Colonic mucosa (tissue), 4 donors: ENCODE measurements at regions of chr3 and their contacts with region 1.

Region 1: GRCh38 chr3:49906004-49906743 is 2.5 kb upstream of the MST1R start:
- DNase-seq: peak; percentile 90
- H3K4me3 ChIP-seq: peak overlapping the region; percentile 8
- H3K27ac ChIP-seq: peak overlapping the region; percentile 86
- H3K4me1 ChIP-seq: peaks cover 29% of the 10 kb centered on the region
- H3K27me3 ChIP-seq: no peaks in the 10 kb centered on the region
- CTCF ChIP-seq: peak; percentile 58

Region 2: DNA sequence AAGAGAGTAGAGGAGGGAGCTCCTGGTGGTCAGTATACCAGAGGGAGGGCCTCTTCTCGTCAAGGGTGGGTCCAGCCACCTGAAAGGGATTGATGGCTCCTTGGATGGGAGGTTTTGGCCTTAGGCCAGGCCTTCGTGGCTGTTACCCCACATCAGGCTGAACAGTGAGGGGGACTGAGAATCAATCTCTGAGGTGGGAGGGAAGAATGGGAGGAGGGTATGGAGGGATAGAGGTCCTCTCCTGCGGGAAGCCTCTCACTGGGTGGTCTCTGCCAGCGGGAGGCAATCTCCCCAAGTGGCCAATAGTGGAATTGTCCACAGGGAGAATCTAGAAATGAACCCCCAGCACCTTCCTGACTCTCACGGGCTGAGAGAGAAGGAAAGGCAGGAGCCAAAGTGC is 298.4 kb before region 1 on chr3:
- intact Hi-C with region 1: no loop called
- DNase-seq: no peak
- H3K4me3 ChIP-seq: no peak overlapping the region
- H3K27ac ChIP-seq: no peak overlapping the region
- H3K4me1 ChIP-seq: no peaks in the 10 kb centered on the region
- H3K27me3 ChIP-seq: no peaks in the 10 kb centered on the region
- CTCF ChIP-seq: no peak

Region 3: GRCh38 chr3:49703443-49703927 is 202.7 kb before region 1 on chr3:
- intact Hi-C with region 1: loop called (anchors 10 kb)
- DNase-seq: peak; percentile 65
- H3K4me3 ChIP-seq: no peak overlapping the region
- H3K27ac ChIP-seq: no peak overlapping the region
- H3K4me1 ChIP-seq: no peaks in the 10 kb centered on the region
- H3K27me3 ChIP-seq: no peaks in the 10 kb centered on the region
- CTCF ChIP-seq: peak; percentile 88

Region 4: GRCh38 chr3:49802719-49803464 is 103.3 kb before region 1 on chr3 and contains the start of gene INKA1:
- intact Hi-C with region 1: loop called (anchors 2 kb)
- DNase-seq: peak; percentile 95
- H3K4me3 ChIP-seq: peak within 1 kb of the TSS; percentile 62
- H3K27ac ChIP-seq: peak within 1 kb of the TSS; percentile 79
- H3K4me1 ChIP-seq: peaks cover 5% of the 10 kb centered on the region
- H3K27me3 ChIP-seq: peaks cover 7% of the 10 kb centered on the region
- CTCF ChIP-seq: no peak
- total RNA-seq, gene INKA1: 0.57 to 0.88 TPM

Region 5: GRCh38 chr3:49839193-49839809 is 66.9 kb before region 1 on chr3:
- intact Hi-C with region 1: loop called (anchors 2 kb)
- DNase-seq: peak; percentile 80
- H3K4me3 ChIP-seq: no peak overlapping the region
- H3K27ac ChIP-seq: no peak overlapping the region
- H3K4me1 ChIP-seq: no peaks in the 10 kb centered on the region
- H3K27me3 ChIP-seq: no peaks in the 10 kb centered on the region
- CTCF ChIP-seq: peak; percentile 86

Region 6: DNA sequence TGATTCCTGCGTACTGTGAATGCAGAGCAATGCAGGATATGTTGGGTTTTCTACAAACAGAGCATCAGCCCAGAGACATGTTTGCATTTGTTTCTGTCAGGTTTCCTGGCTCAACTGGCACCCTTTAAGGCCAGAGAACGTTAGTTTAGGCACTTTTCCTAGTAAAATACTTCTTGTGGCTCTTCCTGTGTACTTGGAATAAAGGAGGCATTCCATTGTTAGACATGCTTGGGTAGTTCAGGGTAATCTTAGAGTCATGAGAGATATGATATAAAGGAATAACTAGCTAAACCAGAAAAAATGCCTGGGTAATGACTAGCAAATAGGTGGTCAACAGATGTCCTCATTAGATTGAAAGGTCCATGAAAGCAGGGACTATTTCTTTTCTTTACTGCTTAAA is 122.2 kb after region 1 on chr3:
- intact Hi-C with region 1: no loop called
- DNase-seq: no peak
- H3K4me3 ChIP-seq: no peak overlapping the region
- H3K27ac ChIP-seq: no peak overlapping the region
- H3K4me1 ChIP-seq: no peaks in the 10 kb centered on the region
- H3K27me3 ChIP-seq: no peaks in the 10 kb centered on the region
- CTCF ChIP-seq: no peak

Region 7: DNA sequence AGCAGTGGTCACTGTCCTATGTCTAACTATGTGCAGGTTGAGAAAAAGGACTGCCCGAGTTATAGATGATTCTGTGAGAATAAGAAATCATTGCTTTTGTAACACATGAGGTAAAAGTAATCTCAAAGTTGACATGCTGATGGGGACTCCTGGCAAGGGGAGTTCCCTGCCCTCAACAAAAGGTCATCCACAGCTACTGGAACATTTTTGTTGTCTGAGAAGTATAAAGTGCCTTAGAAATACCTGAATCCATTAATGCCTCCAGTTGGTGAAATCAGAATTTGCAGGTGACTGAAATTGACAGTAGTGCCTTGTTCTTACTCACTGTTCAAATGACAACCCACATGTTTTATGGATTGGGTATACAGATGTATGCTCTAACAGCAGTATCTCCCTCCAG is 138.8 kb after region 1 on chr3:
- intact Hi-C with region 1: no loop called
- DNase-seq: no peak
- H3K4me3 ChIP-seq: no peak overlapping the region
- H3K27ac ChIP-seq: no peak overlapping the region
- H3K4me1 ChIP-seq: no peaks in the 10 kb centered on the region
- H3K27me3 ChIP-seq: no peaks in the 10 kb centered on the region
- CTCF ChIP-seq: no peak